Adrenal gland (tissue), 19 donors: ENCODE measurements at regions of chr21 and their contacts with region 1.

Region 1: GRCh38 chr21:17295997-17296396 is 216.8 kb upstream of the CXADR start:
- DNase-seq: no peak
- H3K4me3 ChIP-seq: no peak overlapping the region
- H3K27ac ChIP-seq: no peak overlapping the region
- H3K4me1 ChIP-seq: peaks cover 0 to 5% of the 10 kb centered on the region in 2 donors
- H3K27me3 ChIP-seq: no peaks in the 10 kb centered on the region
- CTCF ChIP-seq: no peak
- POLR2A ChIP-seq: no peak

Region 2: DNA sequence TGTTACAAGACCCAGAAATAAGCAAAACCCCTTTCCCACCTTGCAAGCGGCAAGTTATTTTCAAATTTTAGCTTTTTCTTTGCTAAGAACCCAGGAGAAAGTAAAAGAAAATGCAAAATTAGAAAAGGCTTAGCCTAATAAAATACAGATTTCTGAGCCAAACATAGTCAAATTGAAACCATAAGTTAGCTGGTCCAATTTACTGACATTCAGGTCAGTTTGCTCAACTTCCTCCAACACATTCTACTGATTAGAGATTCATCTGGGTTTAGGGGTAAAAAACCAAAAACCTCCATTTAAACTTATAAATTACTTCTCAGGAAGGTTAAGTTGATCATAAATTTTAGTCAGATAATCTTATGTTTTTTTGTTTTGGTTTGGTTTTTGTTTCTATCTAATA is 485.0 kb before region 1 on chr21:
- intact Hi-C with region 1: no loop called
- DNase-seq: no peak
- H3K4me3 ChIP-seq: no peak overlapping the region
- H3K27ac ChIP-seq: no peak overlapping the region
- H3K4me1 ChIP-seq: no peaks in the 10 kb centered on the region
- H3K27me3 ChIP-seq: no peaks in the 10 kb centered on the region
- CTCF ChIP-seq: no peak
- POLR2A ChIP-seq: no peak

Region 3: DNA sequence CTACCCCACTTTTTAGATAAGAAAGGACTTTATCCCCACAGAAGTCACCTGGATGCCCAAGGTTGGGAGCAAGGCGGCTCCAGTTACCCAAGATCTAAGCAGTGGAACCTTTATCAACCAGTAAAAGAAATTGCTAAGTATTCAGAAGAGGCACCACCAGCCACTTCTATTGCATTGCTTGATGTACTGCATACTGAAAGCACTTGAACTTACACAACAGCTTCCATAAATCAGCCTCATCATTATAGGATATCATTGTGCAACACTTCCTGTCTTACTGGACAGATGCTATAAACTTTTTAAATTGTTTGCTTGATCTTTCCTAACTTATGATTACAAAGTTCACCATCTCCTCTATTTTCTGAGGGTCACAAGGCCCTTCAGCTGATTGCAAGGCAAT is 425.9 kb before region 1 on chr21:
- intact Hi-C with region 1: loop called in 1 of 2 experiments (anchors 10 kb)
- DNase-seq: no peak
- H3K4me3 ChIP-seq: no peak overlapping the region
- H3K27ac ChIP-seq: no peak overlapping the region
- H3K4me1 ChIP-seq: no peaks in the 10 kb centered on the region
- H3K27me3 ChIP-seq: no peaks in the 10 kb centered on the region
- CTCF ChIP-seq: no peak
- POLR2A ChIP-seq: no peak